ENCODE measurements at regions of chr3 and their contacts with region 1.

Region 1: GRCh38 chr3:101381809-101382208 is 61.4 kb upstream of the IMPG2 start:
- DNase-seq: peak in 3 of 14 experiments; percentile 55 to 64 (median 56)
- ATAC-seq: peak; percentile 59
- H3K4me3 ChIP-seq: no peak overlapping the region
- H3K4me3 Mint-ChIP-seq: no peak overlapping the region
- H3K27ac ChIP-seq: no peak overlapping the region
- H3K27ac Mint-ChIP-seq: peak overlapping the region; percentile 45
- H3K4me1 ChIP-seq: peaks cover 11% of the 10 kb centered on the region
- H3K4me1 Mint-ChIP-seq: peaks cover 75% of the 10 kb centered on the region
- H3K27me3 ChIP-seq: no peaks in the 10 kb centered on the region
- H3K27me3 Mint-ChIP-seq: no peaks in the 10 kb centered on the region
- CTCF ChIP-seq: peak; percentile 34

Region 2: DNA sequence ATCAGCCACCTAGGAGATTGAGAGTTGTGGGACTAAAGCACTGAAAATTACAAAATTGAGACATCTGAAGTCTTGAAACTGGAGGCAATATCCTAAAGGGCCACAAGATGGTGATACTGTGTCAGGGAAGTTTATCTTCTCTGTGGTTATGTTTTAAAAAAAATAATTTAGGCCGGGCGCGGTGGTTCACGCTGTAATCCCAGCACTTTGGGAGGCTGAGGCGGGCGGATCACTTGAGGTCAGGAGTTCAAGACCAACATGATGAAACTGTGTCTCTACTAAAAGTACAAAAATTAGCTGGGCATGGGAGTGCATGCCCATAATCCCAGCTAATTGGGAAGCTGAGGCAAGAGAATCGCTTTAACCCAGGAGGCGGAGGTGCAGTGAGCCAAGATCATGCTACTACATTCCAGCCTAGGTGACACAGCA is 1065.2 kb before region 1 on chr3:
- CTCF ChIA-PET with region 1: no interaction called
- POLR2A ChIA-PET with region 1: no interaction called
- intact Hi-C with region 1: loop called in 1 of 2 experiments (anchors 5 kb)
- DNase-seq: peak in 9 of 14 experiments; percentile 12 to 74 (median 21)
- ATAC-seq: peak; percentile 89
- H3K4me3 ChIP-seq: no peak overlapping the region
- H3K4me3 Mint-ChIP-seq: no peak overlapping the region
- H3K27ac ChIP-seq: no peak overlapping the region
- H3K27ac Mint-ChIP-seq: no peak overlapping the region
- H3K4me1 ChIP-seq: peaks cover 3% of the 10 kb centered on the region
- H3K4me1 Mint-ChIP-seq: peaks cover 5% of the 10 kb centered on the region
- H3K27me3 ChIP-seq: no peaks in the 10 kb centered on the region
- H3K27me3 Mint-ChIP-seq: no peaks in the 10 kb centered on the region
- CTCF ChIP-seq: peak; percentile 48

Region 3: DNA sequence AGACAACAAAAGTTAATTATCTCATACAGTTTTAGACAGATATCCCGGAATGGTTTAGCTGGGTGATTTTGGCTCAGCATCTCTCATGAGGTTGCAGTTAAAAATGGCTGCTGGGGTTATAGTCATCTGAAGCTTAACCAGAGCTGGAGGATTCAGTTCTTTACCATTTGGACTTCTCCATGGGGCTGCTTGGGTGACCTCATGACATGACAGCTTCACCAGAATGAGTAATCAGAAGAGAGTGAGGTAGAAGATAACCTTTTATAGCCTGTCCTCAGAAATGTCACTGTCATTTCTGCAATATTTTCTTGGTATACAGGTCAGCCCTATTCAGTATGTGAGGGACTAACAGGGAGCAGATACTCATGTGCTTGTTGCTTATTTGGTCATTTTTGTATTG is 641.6 kb before region 1 on chr3:
- CTCF ChIA-PET with region 1: no interaction called
- POLR2A ChIA-PET with region 1: no interaction called
- intact Hi-C with region 1: loop called in 1 of 2 experiments (anchors 10 kb)
- DNase-seq: no peak
- ATAC-seq: no peak
- H3K4me3 ChIP-seq: no peak overlapping the region
- H3K4me3 Mint-ChIP-seq: no peak overlapping the region
- H3K27ac ChIP-seq: no peak overlapping the region
- H3K27ac Mint-ChIP-seq: no peak overlapping the region
- H3K4me1 ChIP-seq: no peaks in the 10 kb centered on the region
- H3K4me1 Mint-ChIP-seq: no peaks in the 10 kb centered on the region
- H3K27me3 ChIP-seq: no peaks in the 10 kb centered on the region
- H3K27me3 Mint-ChIP-seq: no peaks in the 10 kb centered on the region
- CTCF ChIP-seq: no peak

Region 4: DNA sequence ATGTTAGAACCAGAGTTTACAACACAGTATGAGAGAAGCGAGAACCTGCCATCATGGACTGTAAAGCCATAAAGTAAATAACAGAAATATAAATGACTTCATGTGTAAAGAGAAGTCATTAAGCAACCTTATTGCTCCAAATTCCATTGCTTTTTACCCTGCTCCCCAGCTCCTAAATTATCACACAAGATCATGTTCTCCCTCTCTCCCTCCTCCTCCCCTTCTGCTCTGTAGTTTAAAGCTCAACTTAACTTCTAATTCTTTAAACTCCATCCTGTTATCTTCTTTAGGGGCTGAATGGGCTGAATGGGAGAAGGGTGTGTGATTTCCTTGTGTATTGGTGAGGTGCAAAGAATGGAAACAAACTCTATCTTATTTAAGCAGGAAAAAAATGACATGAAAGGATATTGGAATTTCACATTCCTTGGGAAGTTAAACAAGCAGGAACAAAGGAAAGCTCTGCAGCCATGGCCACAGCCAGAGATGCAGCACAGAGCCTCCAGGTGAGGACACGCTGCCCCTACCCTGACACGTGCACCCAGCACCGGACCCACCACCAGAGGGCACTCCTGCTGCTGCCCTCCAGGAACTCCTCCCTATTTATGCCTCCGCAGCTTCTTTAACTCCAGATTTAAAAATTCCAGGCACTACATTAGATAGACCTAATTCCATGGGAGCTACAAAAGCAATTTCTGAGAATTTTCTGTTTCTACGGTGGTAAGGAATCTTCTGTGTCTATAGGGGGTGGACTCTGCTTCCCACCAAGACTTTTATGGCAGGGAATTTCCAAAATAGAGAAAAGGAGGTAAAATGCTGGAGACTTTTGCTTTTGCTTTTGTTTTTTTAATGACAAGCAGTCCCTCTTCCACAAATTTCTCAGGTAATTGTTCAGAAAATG is 311.7 kb before region 1 on chr3:
- CTCF ChIA-PET with region 1: interaction called, 4 read pairs
- POLR2A ChIA-PET with region 1: no interaction called
- intact Hi-C with region 1: loop called in 1 of 2 experiments (anchors 5 kb)
- DNase-seq: peak; percentile 29 to 72 (median 52)
- ATAC-seq: peak; percentile 77
- H3K4me3 ChIP-seq: no peak overlapping the region
- H3K4me3 Mint-ChIP-seq: no peak overlapping the region
- H3K27ac ChIP-seq: no peak overlapping the region
- H3K27ac Mint-ChIP-seq: no peak overlapping the region
- H3K4me1 ChIP-seq: no peaks in the 10 kb centered on the region
- H3K4me1 Mint-ChIP-seq: no peaks in the 10 kb centered on the region
- H3K27me3 ChIP-seq: peaks cover 4 to 7% of the 10 kb centered on the region in 2 experiments
- H3K27me3 Mint-ChIP-seq: peaks cover 19% of the 10 kb centered on the region
- CTCF ChIP-seq: peak; percentile 73

Measured in CD4-positive, alpha-beta T cell (primary cell).